ENCODE measurements at regions of chr18 and their contacts with region 1.

Region 1: GRCh38 chr18:58043491-58044379 is at the start of gene NEDD4L:
- DNase-seq: peak; percentile 19
- H3K4me3 ChIP-seq: peak within 1 kb of the TSS; percentile 73
- H3K27me3 ChIP-seq: peaks cover 1% of the 10 kb centered on the region; the same call in 1 of the 2 replicates
- CTCF ChIP-seq: peak; percentile 95
- polyA plus RNA-seq, gene NEDD4L: 10.8 and 14.1 TPM in 2 replicates

Region 2: GRCh38 chr18:57881818-57882413 is 161.8 kb before region 1 on chr18:
- CTCF ChIA-PET with region 1: interaction called, 13 read pairs
- POLR2A ChIA-PET with region 1: no interaction called
- DNase-seq: peak; percentile 33
- H3K4me3 ChIP-seq: no peak overlapping the region
- H3K27me3 ChIP-seq: no peaks in the 10 kb centered on the region
- CTCF ChIP-seq: peak; percentile 93

Region 3: GRCh38 chr18:58110398-58110797 is 66.7 kb after region 1 on chr18:
- CTCF ChIA-PET with region 1: interaction called, 10 read pairs
- POLR2A ChIA-PET with region 1: no interaction called
- DNase-seq: no peak
- H3K4me3 ChIP-seq: no peak overlapping the region
- H3K27me3 ChIP-seq: no peaks in the 10 kb centered on the region; the same call in 1 of the 2 replicates
- CTCF ChIP-seq: no peak

Region 4: DNA sequence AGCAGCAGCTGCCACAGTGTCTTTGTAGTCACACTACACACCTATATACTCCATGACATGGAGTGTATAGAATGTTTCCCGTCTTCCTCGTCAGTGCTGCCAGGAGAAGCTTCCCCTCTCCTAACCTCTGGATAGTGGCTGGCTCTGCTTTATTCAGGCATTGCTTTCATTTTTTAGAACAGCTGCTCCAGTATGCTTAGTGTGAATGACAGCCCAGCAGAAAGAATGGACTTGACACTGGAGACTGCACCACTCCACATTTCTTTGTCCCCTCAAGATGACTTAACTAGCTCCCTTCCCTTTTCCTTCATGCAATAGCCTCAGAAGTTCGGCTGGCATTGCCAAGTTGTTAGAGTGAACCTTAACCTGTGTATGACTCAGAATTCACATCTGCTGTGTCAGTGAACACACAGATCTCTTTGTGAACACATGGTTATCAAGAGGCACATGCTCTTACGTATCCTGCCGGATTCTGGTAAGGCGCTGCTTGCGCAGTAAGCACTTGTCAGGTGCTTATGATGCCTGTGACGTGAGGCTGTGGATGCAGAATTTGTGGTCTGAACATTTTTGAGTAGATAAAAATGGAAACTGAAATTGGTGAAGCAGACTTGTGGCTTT is 74.2 kb after region 1 on chr18:
- CTCF ChIA-PET with region 1: interaction called, 28 read pairs
- POLR2A ChIA-PET with region 1: interaction called, 3 read pairs
- DNase-seq: no peak
- H3K4me3 ChIP-seq: no peak overlapping the region
- H3K27me3 ChIP-seq: no peaks in the 10 kb centered on the region; the same call in 1 of the 2 replicates
- CTCF ChIP-seq: no peak

Region 5: GRCh38 chr18:58125183-58125582 is 81.4 kb after region 1 on chr18:
- CTCF ChIA-PET with region 1: interaction called, 28 read pairs
- POLR2A ChIA-PET with region 1: interaction called, 3 read pairs
- DNase-seq: no peak
- H3K4me3 ChIP-seq: no peak overlapping the region
- H3K27me3 ChIP-seq: 0 out of 2 replicates have a peak, but pooled peaks cover 2% of the 10 kb centered on the region
- CTCF ChIP-seq: no peak

Measured in BJ (cell line).